ENCODE measurements at regions of chr4 and their contacts with region 1.

Region 1: GRCh38 chr4:148152871-148153625 is 289.2 kb downstream of the NR3C2 start:
- DNase-seq: no peak
- ATAC-seq: no peak
- H3K4me3 ChIP-seq: no peak overlapping the region
- H3K27ac ChIP-seq: no peak overlapping the region
- H3K4me1 ChIP-seq: no peaks in the 10 kb centered on the region
- H3K27me3 ChIP-seq: no peaks in the 10 kb centered on the region
- CTCF ChIP-seq: no peak
- POLR2A ChIP-seq: no peak
- RAD21 ChIP-seq: no peak

Region 2: GRCh38 chr4:147879676-147880075 is 273.4 kb before region 1 on chr4:
- CTCF ChIA-PET with region 1: no interaction called
- POLR2A ChIA-PET with region 1: no interaction called
- dilution Hi-C with region 1: no loop called
- in situ Hi-C with region 1: no loop called
- intact Hi-C with region 1: loop called (anchors 5 kb)
- DNase-seq: no peak
- ATAC-seq: no peak
- H3K4me3 ChIP-seq: no peak overlapping the region
- H3K27ac ChIP-seq: no peak overlapping the region
- H3K4me1 ChIP-seq: peaks cover 2% of the 10 kb centered on the region
- H3K27me3 ChIP-seq: no peaks in the 10 kb centered on the region
- CTCF ChIP-seq: no peak
- POLR2A ChIP-seq: no peak
- RAD21 ChIP-seq: no peak

Region 3: DNA sequence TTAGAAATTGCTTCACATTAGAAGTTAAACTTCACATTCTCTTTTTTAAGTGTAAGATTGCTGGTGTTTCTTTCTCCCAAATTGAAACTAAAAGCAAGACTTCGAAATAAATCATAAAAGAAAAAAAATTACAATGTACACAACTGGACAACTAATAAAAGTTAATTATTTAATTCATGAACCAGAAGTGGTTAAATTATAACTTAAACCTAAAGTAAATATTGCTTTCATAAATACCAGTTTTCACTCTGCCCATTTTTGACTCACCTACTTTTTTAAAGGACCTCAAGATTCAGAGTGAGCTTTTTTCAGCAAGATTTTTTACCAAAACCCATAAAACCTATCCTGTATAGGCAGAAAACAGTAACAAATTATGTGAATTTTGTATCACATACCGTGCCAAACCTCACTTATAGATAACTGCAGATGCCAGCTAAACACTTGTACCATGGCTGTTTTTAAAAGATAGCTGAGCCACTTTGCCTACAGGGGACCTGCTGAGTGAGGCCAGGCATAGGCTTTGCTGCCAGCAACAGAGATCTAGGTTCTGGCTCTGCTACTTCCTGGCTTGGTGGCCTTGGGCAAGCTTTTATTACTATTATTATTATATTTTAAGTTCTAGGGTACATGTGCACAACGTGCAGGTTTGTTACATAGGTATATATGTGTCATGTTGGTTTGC is 29.3 kb after region 1 on chr4:
- CTCF ChIA-PET with region 1: no interaction called
- POLR2A ChIA-PET with region 1: no interaction called
- dilution Hi-C with region 1: no loop called
- in situ Hi-C with region 1: no loop called
- intact Hi-C with region 1: loop called (anchors 1 kb)
- DNase-seq: no peak
- ATAC-seq: no peak
- H3K4me3 ChIP-seq: no peak overlapping the region
- H3K27ac ChIP-seq: no peak overlapping the region
- H3K4me1 ChIP-seq: no peaks in the 10 kb centered on the region
- H3K27me3 ChIP-seq: no peaks in the 10 kb centered on the region; the same call in 1 of the 2 replicates
- CTCF ChIP-seq: no peak
- POLR2A ChIP-seq: no peak
- RAD21 ChIP-seq: no peak

Measured in IMR-90 (cell line).